ENCODE measurements at regions of chr2 and their contacts with region 1.

Region 1: DNA sequence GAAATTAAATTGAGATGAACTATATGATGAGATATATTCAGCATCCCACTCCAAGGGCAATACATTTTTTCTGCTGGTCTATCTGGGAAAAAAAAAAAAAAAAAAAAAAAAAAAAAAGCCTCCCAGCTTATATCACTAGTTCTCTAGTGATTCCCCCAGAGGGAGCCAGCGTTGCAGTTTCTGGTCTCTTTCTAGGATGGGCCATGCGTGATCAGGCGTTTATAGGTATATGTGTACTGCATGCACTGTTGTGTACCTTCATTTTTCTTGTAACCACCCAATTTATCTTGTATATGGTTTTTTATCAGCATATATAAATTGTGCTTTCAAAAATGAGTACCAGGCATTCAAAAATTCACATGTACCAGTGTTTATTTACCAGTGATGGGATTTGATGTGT is 35.1 kb downstream of the DCDC2C start:
- DNase-seq: peak; percentile 60 to 74
- H3K4me3 ChIP-seq: no peak overlapping the region
- H3K4me3 Mint-ChIP-seq: no peak overlapping the region
- H3K27ac Mint-ChIP-seq: no peak overlapping the region
- H3K4me1 ChIP-seq: no peaks in the 10 kb centered on the region
- H3K4me1 Mint-ChIP-seq: no peaks in the 10 kb centered on the region
- H3K27me3 ChIP-seq: peaks cover 4% of the 10 kb centered on the region
- H3K27me3 Mint-ChIP-seq: peaks cover 19% of the 10 kb centered on the region
- CTCF ChIP-seq: peak; percentile 40 to 55

Region 2: GRCh38 chr2:3780477-3781402 is 42.3 kb after region 1 on chr2:
- CTCF ChIA-PET with region 1: interaction called, 5 read pairs
- POLR2A ChIA-PET with region 1: no interaction called
- intact Hi-C with region 1: loop called (anchors 1 kb)
- DNase-seq: peak; percentile 54
- H3K4me3 ChIP-seq: no peak overlapping the region
- H3K4me3 Mint-ChIP-seq: no peak overlapping the region
- H3K27ac Mint-ChIP-seq: no peak overlapping the region
- H3K4me1 ChIP-seq: no peaks in the 10 kb centered on the region
- H3K4me1 Mint-ChIP-seq: no peaks in the 10 kb centered on the region
- H3K27me3 ChIP-seq: no peaks in the 10 kb centered on the region
- H3K27me3 Mint-ChIP-seq: peaks cover 26% of the 10 kb centered on the region
- CTCF ChIP-seq: peak; percentile 19 to 69

Region 3: DNA sequence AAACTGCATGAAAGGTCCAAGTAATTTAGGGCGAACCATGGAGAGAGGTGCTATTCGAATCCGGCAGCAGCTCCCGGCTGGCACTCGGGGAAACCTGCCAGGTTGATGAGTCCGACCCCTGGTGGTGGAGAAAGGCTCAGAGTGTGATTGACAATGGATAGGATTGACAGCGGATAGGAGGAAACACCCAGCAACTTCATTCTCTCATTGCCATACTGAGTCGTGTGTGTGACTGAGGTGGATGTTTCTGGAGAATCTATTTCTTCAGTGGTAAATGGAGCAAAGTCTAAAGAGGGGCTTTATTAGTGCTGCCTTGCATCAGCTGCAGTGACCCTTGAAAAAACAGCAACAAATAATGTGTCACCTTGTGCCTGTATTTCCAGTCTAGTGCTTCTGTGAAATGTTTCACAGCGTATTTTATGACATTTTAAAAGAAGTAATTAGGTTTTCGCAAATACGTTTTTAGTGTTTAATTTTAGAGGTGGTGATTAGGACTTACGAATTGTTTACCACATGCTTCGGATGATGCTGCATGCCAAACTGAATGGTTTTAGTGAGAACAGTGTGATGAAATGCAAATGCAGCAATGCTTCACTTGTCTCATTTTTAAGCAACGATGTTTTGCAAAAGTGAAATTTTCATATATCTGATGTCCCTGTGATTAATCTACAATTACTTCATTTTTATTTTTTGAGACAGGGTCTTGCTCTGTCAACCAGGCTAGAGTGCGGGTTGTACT is 66.9 kb after region 1 on chr2:
- CTCF ChIA-PET with region 1: no interaction called
- POLR2A ChIA-PET with region 1: no interaction called
- intact Hi-C with region 1: loop called (anchors 2 kb)
- DNase-seq: peak; percentile 54 to 58
- H3K4me3 ChIP-seq: no peak overlapping the region
- H3K4me3 Mint-ChIP-seq: no peak overlapping the region
- H3K27ac Mint-ChIP-seq: no peak overlapping the region
- H3K4me1 ChIP-seq: no peaks in the 10 kb centered on the region
- H3K4me1 Mint-ChIP-seq: no peaks in the 10 kb centered on the region
- H3K27me3 ChIP-seq: no peaks in the 10 kb centered on the region
- H3K27me3 Mint-ChIP-seq: peaks cover 4% of the 10 kb centered on the region
- CTCF ChIP-seq: peak; percentile 41 to 66

Region 4: GRCh38 chr2:3827673-3828575 is 89.5 kb after region 1 on chr2:
- CTCF ChIA-PET with region 1: interaction called, 5 read pairs
- POLR2A ChIA-PET with region 1: no interaction called
- intact Hi-C with region 1: loop called (anchors 1 kb)
- DNase-seq: peak in 1 of 2 experiments; percentile 28
- H3K4me3 ChIP-seq: no peak overlapping the region
- H3K4me3 Mint-ChIP-seq: no peak overlapping the region
- H3K27ac Mint-ChIP-seq: no peak overlapping the region
- H3K4me1 ChIP-seq: no peaks in the 10 kb centered on the region
- H3K4me1 Mint-ChIP-seq: no peaks in the 10 kb centered on the region
- H3K27me3 ChIP-seq: no peaks in the 10 kb centered on the region
- H3K27me3 Mint-ChIP-seq: peaks cover 20% of the 10 kb centered on the region
- CTCF ChIP-seq: peak; percentile 28 to 61